MCF 10A (cell line): ENCODE measurements at regions of chr1 and their contacts with region 1.

Region 1: GRCh38 chr1:33295450-33296081 is 25.3 kb downstream of the A3GALT2 start:
- DNase-seq: peak; percentile 85
- H3K4me3 Mint-ChIP-seq: no peak overlapping the region
- H3K27ac Mint-ChIP-seq: no peak overlapping the region
- H3K4me1 Mint-ChIP-seq: no peaks in the 10 kb centered on the region
- H3K27me3 Mint-ChIP-seq: no peaks in the 10 kb centered on the region
- CTCF ChIP-seq: peak; percentile 91

Region 2: DNA sequence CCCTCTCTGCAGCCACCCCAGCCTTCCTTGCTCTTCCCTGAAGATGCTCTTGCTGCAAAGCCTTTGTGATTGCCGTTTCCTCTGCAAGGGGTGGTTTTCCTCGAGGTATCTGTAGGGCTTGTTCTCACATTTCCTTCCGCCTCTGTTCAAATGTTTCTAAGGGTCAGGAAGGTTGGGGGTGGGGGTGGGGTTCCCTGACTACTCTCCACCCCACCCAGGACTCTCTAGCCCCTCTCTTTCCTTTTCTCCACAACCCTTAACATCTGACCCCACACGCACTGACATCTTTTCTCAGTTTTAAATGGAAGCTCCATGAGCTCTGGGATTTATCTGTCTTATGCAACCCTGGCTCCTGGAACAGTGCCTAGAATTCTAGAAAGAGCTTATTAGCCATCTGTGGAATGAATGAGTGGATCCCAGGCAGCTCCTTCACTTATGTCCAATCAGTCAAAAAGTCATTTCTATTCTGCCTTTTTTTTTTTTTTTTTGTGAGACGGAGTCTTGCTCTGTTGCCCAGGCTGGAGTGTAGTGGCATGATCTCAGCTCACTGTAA is 66.6 kb before region 1 on chr1:
- CTCF ChIA-PET with region 1: interaction called, 12 read pairs
- POLR2A ChIA-PET with region 1: no interaction called
- intact Hi-C with region 1: no loop called
- DNase-seq: peak; percentile 91
- H3K4me3 Mint-ChIP-seq: no peak overlapping the region
- H3K27ac Mint-ChIP-seq: no peak overlapping the region
- H3K4me1 Mint-ChIP-seq: peaks cover 8% of the 10 kb centered on the region
- H3K27me3 Mint-ChIP-seq: no peaks in the 10 kb centered on the region
- CTCF ChIP-seq: no peak

Region 3: DNA sequence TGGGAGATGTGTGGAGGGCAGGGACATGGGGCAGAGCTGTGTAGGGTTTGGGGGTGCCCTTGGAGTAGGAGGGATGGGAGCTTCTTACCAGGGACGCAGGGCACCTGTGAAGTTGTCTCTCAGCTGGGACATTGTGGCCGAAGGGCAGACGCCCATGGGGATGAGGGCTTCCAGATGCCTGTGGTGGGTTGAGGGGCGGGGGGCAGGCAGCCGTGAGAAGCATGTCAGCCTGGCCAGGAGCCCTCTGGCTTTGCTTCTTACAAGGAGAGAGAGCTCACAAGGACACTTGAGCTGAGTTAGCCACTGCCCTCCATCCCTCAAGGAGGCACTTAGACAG is 16.8 kb after region 1 on chr1:
- CTCF ChIA-PET with region 1: interaction called, 33 read pairs
- POLR2A ChIA-PET with region 1: no interaction called
- intact Hi-C with region 1: no loop called
- DNase-seq: no peak
- H3K4me3 Mint-ChIP-seq: no peak overlapping the region
- H3K27ac Mint-ChIP-seq: no peak overlapping the region
- H3K4me1 Mint-ChIP-seq: no peaks in the 10 kb centered on the region
- H3K27me3 Mint-ChIP-seq: no peaks in the 10 kb centered on the region
- CTCF ChIP-seq: no peak

Region 4: GRCh38 chr1:33342041-33342723 is 46.6 kb after region 1 on chr1:
- CTCF ChIA-PET with region 1: interaction called, 11 read pairs
- POLR2A ChIA-PET with region 1: interaction called, 3 read pairs
- intact Hi-C with region 1: no loop called
- DNase-seq: peak; percentile 93
- H3K4me3 Mint-ChIP-seq: peak overlapping the region; percentile 53
- H3K27ac Mint-ChIP-seq: peak overlapping the region; percentile 85
- H3K4me1 Mint-ChIP-seq: peaks cover 74% of the 10 kb centered on the region
- H3K27me3 Mint-ChIP-seq: no peaks in the 10 kb centered on the region
- CTCF ChIP-seq: no peak

Region 5: GRCh38 chr1:33378976-33379375 is 83.4 kb after region 1 on chr1:
- CTCF ChIA-PET with region 1: interaction called, 10 read pairs
- POLR2A ChIA-PET with region 1: no interaction called
- intact Hi-C with region 1: no loop called
- DNase-seq: no peak
- H3K4me3 Mint-ChIP-seq: no peak overlapping the region
- H3K27ac Mint-ChIP-seq: no peak overlapping the region
- H3K4me1 Mint-ChIP-seq: peaks cover 22% of the 10 kb centered on the region
- H3K27me3 Mint-ChIP-seq: no peaks in the 10 kb centered on the region
- CTCF ChIP-seq: no peak

Region 6: DNA sequence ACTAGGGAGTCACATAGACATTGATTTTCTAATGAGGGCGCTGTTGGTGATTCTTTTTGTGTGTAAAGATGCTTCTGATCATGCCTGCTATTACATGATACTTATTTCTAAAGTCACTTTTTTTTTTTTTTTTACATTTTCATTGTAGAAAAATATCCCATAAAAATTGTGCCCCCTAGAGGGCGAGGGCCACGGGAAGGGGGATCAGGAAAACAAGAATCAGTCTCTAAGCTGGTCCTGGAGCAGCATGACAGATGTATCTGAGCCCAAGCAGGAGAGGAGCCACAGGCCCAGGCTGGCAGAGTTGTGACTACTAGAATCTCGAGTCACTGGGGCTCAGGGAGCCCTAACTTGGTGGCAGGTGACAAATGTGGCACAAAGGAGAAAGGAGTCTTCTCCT is 205.0 kb after region 1 on chr1:
- CTCF ChIA-PET with region 1: no interaction called
- POLR2A ChIA-PET with region 1: no interaction called
- intact Hi-C with region 1: no loop called
- DNase-seq: no peak
- H3K4me3 Mint-ChIP-seq: no peak overlapping the region
- H3K27ac Mint-ChIP-seq: no peak overlapping the region
- H3K4me1 Mint-ChIP-seq: peaks cover 9% of the 10 kb centered on the region
- H3K27me3 Mint-ChIP-seq: no peaks in the 10 kb centered on the region
- CTCF ChIP-seq: no peak

Region 7: DNA sequence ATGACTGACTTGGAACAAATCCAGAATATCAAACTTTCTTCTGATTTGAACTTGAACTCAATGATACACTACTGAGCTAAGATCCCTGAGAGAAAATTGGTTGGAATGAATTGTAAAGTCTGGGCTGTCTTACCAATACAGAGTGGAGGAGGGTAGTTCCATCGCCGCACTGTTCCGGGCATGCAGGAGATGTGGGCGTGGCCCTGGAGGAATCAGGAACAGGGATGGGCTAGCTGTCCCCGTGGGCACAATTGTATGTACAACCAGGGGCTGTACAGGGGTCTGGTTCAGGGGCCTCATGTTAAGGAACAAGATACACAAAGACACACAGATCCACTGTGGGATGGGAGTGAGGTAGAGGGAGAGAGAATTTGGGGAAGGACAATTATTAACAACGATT is 321.2 kb after region 1 on chr1:
- CTCF ChIA-PET with region 1: interaction called, 9 read pairs
- POLR2A ChIA-PET with region 1: no interaction called
- intact Hi-C with region 1: loop called (anchors 2 kb)
- DNase-seq: no peak
- H3K4me3 Mint-ChIP-seq: no peak overlapping the region
- H3K27ac Mint-ChIP-seq: no peak overlapping the region
- H3K4me1 Mint-ChIP-seq: peaks cover 4% of the 10 kb centered on the region
- H3K27me3 Mint-ChIP-seq: peaks cover 85% of the 10 kb centered on the region
- CTCF ChIP-seq: no peak